ENCODE measurements at regions of chr9 and their contacts with region 1.

Region 1: DNA sequence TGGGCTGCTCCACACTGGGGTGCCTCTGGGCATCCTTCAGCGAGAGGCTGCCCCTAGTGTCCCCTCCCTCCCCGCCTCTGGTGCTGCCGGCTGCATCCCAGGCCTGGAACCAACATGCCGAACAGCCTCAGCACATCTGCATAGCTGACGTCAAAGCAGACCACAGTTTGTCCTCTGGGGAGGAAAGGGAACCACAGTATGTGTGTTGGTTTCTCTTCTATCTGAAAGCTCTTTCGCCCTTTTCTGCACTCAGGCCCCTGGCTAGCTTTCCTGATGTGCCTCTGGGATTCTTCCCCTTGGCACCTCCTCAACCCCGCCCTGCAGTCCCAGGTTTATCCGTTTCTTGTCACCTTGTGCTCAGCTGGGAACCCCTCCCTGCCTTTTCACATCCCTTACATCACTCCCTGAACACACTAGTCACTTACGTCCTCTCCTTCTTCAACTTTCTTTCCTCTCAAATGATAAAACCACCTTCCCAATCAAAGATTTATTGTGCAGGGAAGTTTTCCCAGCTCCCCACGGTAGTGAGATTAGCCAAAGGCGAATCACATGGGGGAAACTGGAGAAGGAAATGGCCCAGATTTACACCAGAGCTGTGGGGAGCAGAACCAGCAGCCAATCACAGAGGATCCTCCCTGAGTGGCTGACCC is 35.5 kb upstream of the B4GALT1 start:
- DNase-seq: peak; percentile 78 to 89 (median 85)
- H3K4me3 ChIP-seq: peak overlapping the region in 2 of 7 experiments; percentile 13 to 33
- H3K27ac ChIP-seq: no peak overlapping the region
- H3K4me1 ChIP-seq: peaks cover 0 to 11% (median 5%) of the 10 kb centered on the region in 4 experiments
- H3K27me3 ChIP-seq: no peaks in the 10 kb centered on the region

Region 2: DNA sequence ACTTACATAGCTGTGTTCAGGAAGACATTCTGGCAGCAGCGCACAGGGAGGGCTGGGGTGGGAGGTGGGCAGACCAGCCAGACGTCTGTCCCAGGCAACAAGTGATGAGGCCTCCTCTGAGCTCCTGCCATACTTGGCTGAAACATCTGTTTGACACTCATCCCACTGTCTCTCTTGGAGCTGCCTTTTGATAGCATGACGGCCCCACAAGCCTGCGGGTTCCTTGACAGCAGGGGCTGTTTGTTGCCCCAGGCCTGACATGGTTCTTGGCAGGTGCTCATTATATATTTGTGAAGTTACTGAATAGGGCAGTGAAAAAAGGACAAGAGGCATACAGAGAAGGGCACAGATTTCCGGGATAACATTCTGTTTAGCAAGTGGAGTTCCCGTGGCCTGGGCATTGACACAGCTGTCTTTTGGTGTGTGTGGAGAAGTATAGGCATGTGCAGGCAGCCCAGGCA is 13.3 kb before region 1 on chr9:
- CTCF ChIA-PET with region 1: interaction called, 10 read pairs
- POLR2A ChIA-PET with region 1: no interaction called
- DNase-seq: no peak
- H3K4me3 ChIP-seq: no peak overlapping the region
- H3K27ac ChIP-seq: no peak overlapping the region
- H3K4me1 ChIP-seq: no peaks in the 10 kb centered on the region
- H3K27me3 ChIP-seq: no peaks in the 10 kb centered on the region

Measured in common myeloid progenitor, CD34-positive (primary cell).